ENCODE measurements at regions of chr18 and their contacts with region 1.

Region 1: DNA sequence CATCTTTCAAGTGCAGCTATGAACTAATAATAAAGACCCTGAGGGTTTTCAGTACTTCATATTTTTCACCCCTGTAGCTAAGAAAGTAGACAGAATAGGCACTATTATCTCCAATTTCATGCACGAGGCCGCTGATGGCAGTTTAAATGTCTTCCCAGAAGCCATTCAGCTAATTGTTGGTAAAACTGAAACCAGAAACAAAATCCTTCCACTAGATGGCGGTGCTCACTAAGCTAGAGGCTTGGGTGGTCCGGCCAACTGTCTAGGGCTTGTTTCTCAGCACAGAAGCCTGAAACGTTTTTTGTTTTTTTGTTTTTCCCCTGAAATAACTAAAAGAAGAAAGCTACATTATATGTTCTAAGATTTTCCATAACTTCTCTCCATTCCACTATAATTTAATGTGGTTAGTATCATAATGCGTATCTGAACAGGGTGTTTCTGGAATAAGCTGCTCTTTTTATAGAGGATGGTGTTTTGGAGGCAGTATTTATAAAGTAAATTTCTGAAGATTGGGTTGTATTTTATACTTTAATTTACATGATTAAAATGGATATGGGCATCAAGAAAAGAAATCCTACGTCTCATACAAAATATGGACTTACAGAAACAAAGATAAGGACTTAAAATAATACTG is 159.4 kb downstream of the PIK3C3 start:
- DNase-seq: peak; percentile 36 to 66
- H3K4me3 ChIP-seq: no peak overlapping the region
- H3K4me3 Mint-ChIP-seq: no peak overlapping the region
- H3K27ac Mint-ChIP-seq: no peak overlapping the region
- H3K4me1 ChIP-seq: no peaks in the 10 kb centered on the region
- H3K4me1 Mint-ChIP-seq: peaks cover 4% of the 10 kb centered on the region
- H3K27me3 ChIP-seq: no peaks in the 10 kb centered on the region
- H3K27me3 Mint-ChIP-seq: no peaks in the 10 kb centered on the region
- CTCF ChIP-seq: peak; percentile 53 to 63

Region 2: DNA sequence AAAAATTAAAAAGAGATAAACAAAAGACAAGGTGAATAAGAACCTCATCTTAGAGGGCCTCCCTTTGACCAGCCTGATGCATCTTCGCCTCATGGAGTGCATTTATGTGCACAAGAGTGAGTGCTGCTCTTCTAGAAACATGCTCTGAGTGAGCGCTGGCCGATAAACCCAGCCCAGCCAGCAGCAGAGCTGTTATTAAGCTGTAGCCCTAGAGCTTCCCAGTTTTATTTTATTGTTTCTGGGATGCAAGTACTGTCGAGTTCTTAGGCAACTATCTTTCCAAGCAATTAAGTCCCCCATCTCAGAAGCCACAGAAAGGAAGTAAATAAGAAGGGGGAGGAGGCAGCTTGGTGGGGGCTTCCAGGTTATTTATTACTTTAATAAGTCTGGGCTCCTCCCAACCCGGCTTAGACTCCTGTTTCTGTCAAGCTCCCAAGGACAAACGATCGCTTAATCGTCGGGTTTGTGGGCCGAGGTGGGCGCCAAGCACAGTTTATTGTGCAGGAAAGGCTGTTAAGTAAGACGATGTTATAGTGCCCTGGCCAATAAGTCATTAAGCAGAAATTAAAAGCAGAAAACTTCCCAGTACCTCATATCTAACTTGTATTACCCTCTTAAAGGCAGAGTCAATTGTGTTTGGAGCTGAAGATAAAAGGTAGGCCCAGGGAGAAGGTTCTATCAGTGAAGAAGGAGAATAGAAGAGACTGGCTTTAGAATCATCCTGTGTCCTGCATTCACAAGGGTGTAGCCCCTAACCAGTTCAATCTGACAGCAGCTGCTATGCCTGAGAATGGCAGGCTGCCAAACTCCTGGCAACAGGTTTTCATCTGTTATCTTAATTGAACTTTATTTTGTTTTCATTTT is 16.9 kb after region 1 on chr18:
- CTCF ChIA-PET with region 1: no interaction called
- POLR2A ChIA-PET with region 1: no interaction called
- intact Hi-C with region 1: no loop called
- DNase-seq: no peak
- H3K4me3 ChIP-seq: no peak overlapping the region
- H3K4me3 Mint-ChIP-seq: no peak overlapping the region
- H3K27ac Mint-ChIP-seq: no peak overlapping the region
- H3K4me1 ChIP-seq: no peaks in the 10 kb centered on the region
- H3K4me1 Mint-ChIP-seq: no peaks in the 10 kb centered on the region
- H3K27me3 ChIP-seq: no peaks in the 10 kb centered on the region
- H3K27me3 Mint-ChIP-seq: peaks cover 3% of the 10 kb centered on the region
- CTCF ChIP-seq: no peak

Region 3: GRCh38 chr18:42157878-42158277 is 43.5 kb after region 1 on chr18:
- CTCF ChIA-PET with region 1: no interaction called
- POLR2A ChIA-PET with region 1: no interaction called
- intact Hi-C with region 1: no loop called
- DNase-seq: no peak
- H3K4me3 ChIP-seq: no peak overlapping the region
- H3K4me3 Mint-ChIP-seq: no peak overlapping the region
- H3K27ac Mint-ChIP-seq: no peak overlapping the region
- H3K4me1 ChIP-seq: no peaks in the 10 kb centered on the region
- H3K4me1 Mint-ChIP-seq: peaks cover 5% of the 10 kb centered on the region
- H3K27me3 ChIP-seq: no peaks in the 10 kb centered on the region
- H3K27me3 Mint-ChIP-seq: no peaks in the 10 kb centered on the region
- CTCF ChIP-seq: no peak

Region 4: GRCh38 chr18:42298759-42299675 is 184.6 kb after region 1 on chr18:
- CTCF ChIA-PET with region 1: no interaction called
- POLR2A ChIA-PET with region 1: no interaction called
- intact Hi-C with region 1: no loop called
- DNase-seq: peak; percentile 50 to 70
- H3K4me3 ChIP-seq: no peak overlapping the region
- H3K4me3 Mint-ChIP-seq: no peak overlapping the region
- H3K27ac Mint-ChIP-seq: no peak overlapping the region
- H3K4me1 ChIP-seq: no peaks in the 10 kb centered on the region
- H3K4me1 Mint-ChIP-seq: no peaks in the 10 kb centered on the region
- H3K27me3 ChIP-seq: no peaks in the 10 kb centered on the region
- H3K27me3 Mint-ChIP-seq: no peaks in the 10 kb centered on the region
- CTCF ChIP-seq: peak; percentile 53 to 59

Region 5: GRCh38 chr18:43396266-43396665 is 1281.8 kb after region 1 on chr18:
- CTCF ChIA-PET with region 1: no interaction called
- POLR2A ChIA-PET with region 1: no interaction called
- intact Hi-C with region 1: loop called (anchors 5 kb)
- DNase-seq: no peak
- H3K4me3 ChIP-seq: no peak overlapping the region
- H3K4me3 Mint-ChIP-seq: no peak overlapping the region
- H3K27ac Mint-ChIP-seq: no peak overlapping the region
- H3K4me1 ChIP-seq: no peaks in the 10 kb centered on the region
- H3K4me1 Mint-ChIP-seq: no peaks in the 10 kb centered on the region
- H3K27me3 ChIP-seq: no peaks in the 10 kb centered on the region
- H3K27me3 Mint-ChIP-seq: no peaks in the 10 kb centered on the region
- CTCF ChIP-seq: peak in 1 of 2 experiments; percentile 2

Measured in Caco-2 (cell line).